ENCODE measurements at regions of chr1 and their contacts with region 1.

Region 1: GRCh38 chr1:17465228-17465627 is 25.8 kb upstream of the RCC2 start:
- DNase-seq: no peak
- ATAC-seq: no peak
- H3K4me3 ChIP-seq: no peak overlapping the region
- H3K27ac ChIP-seq: no peak overlapping the region
- H3K4me1 ChIP-seq: no peaks in the 10 kb centered on the region
- H3K27me3 ChIP-seq: peaks cover 2% of the 10 kb centered on the region
- CTCF ChIP-seq: no peak
- POLR2A ChIP-seq: no peak
- RAD21 ChIP-seq: no peak

Region 2: DNA sequence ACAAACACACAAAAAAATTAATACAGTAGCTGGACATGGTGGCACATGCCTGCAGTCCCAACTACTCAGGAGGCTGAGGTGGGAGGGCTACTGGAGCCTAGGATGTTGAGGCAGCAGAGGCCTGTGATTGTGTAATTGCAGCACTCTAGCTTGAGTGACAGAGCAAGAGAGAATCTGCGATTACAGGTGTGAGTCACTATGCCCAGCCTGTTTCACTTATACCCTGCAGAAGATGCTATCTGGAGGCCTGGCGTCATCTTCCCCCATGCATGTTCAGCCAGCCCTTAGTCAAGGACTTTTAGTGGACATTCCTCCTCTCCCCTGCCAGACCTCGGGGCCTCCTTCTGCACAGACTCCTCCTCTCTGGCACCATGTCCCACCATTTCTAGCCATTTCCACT is 10.5 kb after region 1 on chr1:
- CTCF ChIA-PET with region 1: interaction called, 14 read pairs
- POLR2A ChIA-PET with region 1: no interaction called
- dilution Hi-C with region 1: no loop called
- in situ Hi-C with region 1: no loop called
- intact Hi-C with region 1: no loop called
- DNase-seq: peak; percentile 66
- ATAC-seq: no peak; the same call in 1 of the 2 replicates
- H3K4me3 ChIP-seq: no peak overlapping the region
- H3K27ac ChIP-seq: no peak overlapping the region
- H3K4me1 ChIP-seq: no peaks in the 10 kb centered on the region
- H3K27me3 ChIP-seq: no peaks in the 10 kb centered on the region
- CTCF ChIP-seq: no peak
- POLR2A ChIP-seq: no peak
- RAD21 ChIP-seq: no peak

Region 3: DNA sequence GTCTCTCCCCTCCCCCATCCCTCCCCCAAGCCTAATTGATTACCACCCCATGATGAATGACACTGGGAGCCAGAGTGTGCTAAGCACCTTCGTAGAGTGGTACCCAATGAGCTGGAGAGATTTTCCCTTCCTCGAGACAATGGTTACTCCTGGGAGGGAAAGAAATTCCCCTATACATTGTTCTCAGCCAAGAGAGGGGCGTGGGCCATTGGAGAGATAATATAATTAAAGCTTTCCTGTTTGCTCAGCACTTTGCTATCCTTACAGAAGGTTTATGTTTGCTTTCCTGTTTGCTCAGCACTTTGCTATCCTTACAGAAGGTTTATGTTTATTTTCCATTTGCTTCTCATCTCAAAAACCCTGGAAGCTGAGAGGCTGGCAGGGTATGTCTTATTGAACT is 889.4 kb after region 1 on chr1:
- CTCF ChIA-PET with region 1: no interaction called
- POLR2A ChIA-PET with region 1: no interaction called
- dilution Hi-C with region 1: no loop called
- in situ Hi-C with region 1: no loop called
- intact Hi-C with region 1: loop called (anchors 5 kb)
- DNase-seq: no peak
- ATAC-seq: no peak
- H3K4me3 ChIP-seq: no peak overlapping the region
- H3K27ac ChIP-seq: no peak overlapping the region
- H3K4me1 ChIP-seq: no peaks in the 10 kb centered on the region
- H3K27me3 ChIP-seq: no peaks in the 10 kb centered on the region
- CTCF ChIP-seq: no peak
- POLR2A ChIP-seq: no peak
- RAD21 ChIP-seq: no peak

Measured in IMR-90 (cell line).